IMR-90 (cell line): ENCODE measurements at regions of chr7 and their contacts with region 1.

Region 1: GRCh38 chr7:19701471-19701870 is 7.4 kb downstream of the POLR1F start:
- DNase-seq: no peak
- ATAC-seq: no peak
- H3K4me3 ChIP-seq: no peak overlapping the region
- H3K27ac ChIP-seq: no peak overlapping the region
- H3K4me1 ChIP-seq: no peaks in the 10 kb centered on the region
- H3K27me3 ChIP-seq: no peaks in the 10 kb centered on the region
- CTCF ChIP-seq: no peak
- POLR2A ChIP-seq: no peak
- RAD21 ChIP-seq: no peak

Region 2: GRCh38 chr7:19572566-19572965 is 128.9 kb before region 1 on chr7:
- CTCF ChIA-PET with region 1: no interaction called
- POLR2A ChIA-PET with region 1: no interaction called
- dilution Hi-C with region 1: no loop called
- in situ Hi-C with region 1: no loop called
- intact Hi-C with region 1: no loop called
- DNase-seq: no peak
- ATAC-seq: no peak
- H3K4me3 ChIP-seq: no peak overlapping the region
- H3K27ac ChIP-seq: no peak overlapping the region
- H3K4me1 ChIP-seq: no peaks in the 10 kb centered on the region
- H3K27me3 ChIP-seq: no peaks in the 10 kb centered on the region
- CTCF ChIP-seq: no peak
- POLR2A ChIP-seq: no peak
- RAD21 ChIP-seq: no peak

Region 3: GRCh38 chr7:19713676-19714075 is 12.2 kb after region 1 on chr7:
- CTCF ChIA-PET with region 1: interaction called, 13 read pairs
- POLR2A ChIA-PET with region 1: no interaction called
- dilution Hi-C with region 1: no loop called
- in situ Hi-C with region 1: no loop called
- intact Hi-C with region 1: no loop called
- DNase-seq: peak; percentile 45
- ATAC-seq: peak; percentile 35; the same call in 1 of the 2 replicates
- H3K4me3 ChIP-seq: no peak overlapping the region
- H3K27ac ChIP-seq: no peak overlapping the region
- H3K4me1 ChIP-seq: no peaks in the 10 kb centered on the region
- H3K27me3 ChIP-seq: no peaks in the 10 kb centered on the region
- CTCF ChIP-seq: peak; percentile 58
- POLR2A ChIP-seq: no peak
- RAD21 ChIP-seq: peak; percentile 48